GM10248 (cell line): ENCODE measurements at regions of chr12 and their contacts with region 1.

Region 1: GRCh38 chr12:15220994-15221885 is at the start of gene RERG:
- DNase-seq: peak; percentile 80
- CTCF ChIP-seq: peak; percentile 86

Region 2: GRCh38 chr12:14723763-14724162 is 497.5 kb before region 1 on chr12:
- CTCF ChIA-PET with region 1: interaction called, 11 read pairs
- POLR2A ChIA-PET with region 1: no interaction called
- DNase-seq: peak; percentile 49
- CTCF ChIP-seq: peak; percentile 67

Region 3: GRCh38 chr12:15151161-15152120 is 69.8 kb before region 1 on chr12:
- CTCF ChIA-PET with region 1: interaction called, 22 read pairs
- POLR2A ChIA-PET with region 1: no interaction called
- DNase-seq: no peak
- CTCF ChIP-seq: peak; percentile 24

Region 4: DNA sequence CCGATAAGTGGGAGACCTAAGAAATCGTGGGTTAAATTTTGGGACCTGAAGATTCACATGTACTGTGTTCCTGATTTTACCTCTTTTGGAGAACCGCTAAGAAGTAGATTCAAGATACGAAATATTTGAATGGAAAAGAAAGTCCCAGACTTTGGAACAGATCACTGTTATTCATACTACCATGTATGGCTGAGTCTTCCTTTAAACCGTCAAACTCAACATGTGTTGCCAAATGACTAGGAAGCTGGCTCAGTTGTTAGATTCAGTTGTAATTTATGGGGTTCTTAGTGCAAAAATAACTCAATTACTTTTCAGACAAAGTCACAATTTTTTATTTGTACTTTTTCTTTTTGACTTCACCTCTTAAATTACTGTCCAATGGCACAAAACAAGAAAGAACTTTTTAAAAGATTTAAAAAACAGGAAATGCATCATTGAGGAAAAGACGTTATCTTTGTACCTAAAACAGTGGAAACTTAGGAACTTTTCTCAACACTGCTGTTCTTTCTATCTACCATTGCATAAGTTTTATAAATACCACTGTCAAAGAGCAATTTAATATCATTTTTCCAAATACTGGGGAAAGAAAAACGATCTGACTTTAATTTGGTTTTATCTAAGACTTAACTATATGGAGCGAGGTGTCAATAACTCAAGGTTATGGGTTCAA is 15.8 kb before region 1 on chr12:
- CTCF ChIA-PET with region 1: interaction called, 17 read pairs
- POLR2A ChIA-PET with region 1: no interaction called
- DNase-seq: no peak
- CTCF ChIP-seq: no peak

Region 5: DNA sequence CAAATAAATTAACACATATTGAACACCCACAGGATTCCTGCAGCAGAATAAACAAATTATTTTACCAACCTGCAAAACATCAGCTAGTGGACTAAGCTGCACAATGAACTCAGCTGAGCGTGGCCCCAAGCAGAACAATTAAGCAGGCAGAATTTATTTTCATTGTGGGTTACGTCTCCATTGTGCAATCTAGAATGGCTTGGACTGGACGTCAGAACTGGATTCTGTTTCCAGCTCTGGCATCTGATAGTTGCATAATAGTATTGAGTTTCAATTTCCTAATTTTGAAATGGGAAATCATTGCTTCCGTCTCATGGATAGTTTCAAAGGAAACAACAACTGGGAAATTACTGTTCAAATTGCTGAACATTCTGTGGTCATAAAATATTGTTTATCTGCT is 35.5 kb after region 1 on chr12:
- CTCF ChIA-PET with region 1: interaction called, 10 read pairs
- POLR2A ChIA-PET with region 1: no interaction called
- DNase-seq: no peak
- CTCF ChIP-seq: no peak